ENCODE measurements at regions of chr10 and their contacts with region 1.

Region 1: DNA sequence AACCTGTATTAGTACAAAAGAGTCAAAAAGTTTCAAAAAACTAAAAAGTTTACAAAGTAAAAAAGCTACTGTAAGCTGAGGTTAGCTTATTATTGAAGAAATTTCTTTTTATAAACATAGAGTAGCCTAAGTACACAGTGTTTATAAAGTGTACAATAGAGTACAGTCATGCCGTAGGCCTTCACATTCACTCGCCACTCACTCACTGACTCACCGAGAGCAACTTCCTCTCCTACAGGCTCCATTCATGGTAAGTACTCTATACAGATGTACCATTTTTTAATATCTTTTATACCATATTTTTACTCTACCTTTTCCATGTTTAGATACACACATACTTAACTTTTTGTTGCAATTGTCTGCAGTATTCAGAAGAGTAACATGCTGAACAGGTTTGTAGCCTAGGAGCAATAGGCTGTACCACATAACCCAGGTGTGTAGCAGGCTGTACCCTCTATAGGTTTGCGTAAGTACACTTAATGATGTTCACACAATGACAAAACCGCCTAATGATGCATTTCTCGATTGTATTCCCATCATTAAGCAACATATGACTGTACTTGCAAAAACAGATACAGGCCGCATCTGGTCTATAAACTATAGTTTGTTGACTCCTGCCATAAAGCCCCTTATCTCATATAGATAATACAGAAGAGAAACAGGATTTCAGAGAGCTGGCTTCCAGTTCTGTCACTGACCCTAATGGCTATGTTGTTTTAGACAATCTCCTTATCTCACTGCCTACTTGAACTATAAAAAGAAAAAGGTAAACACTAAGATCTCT is 438.8 kb downstream of the HTR7 start:
- DNase-seq: peak; percentile 87
- H3K4me3 Mint-ChIP-seq: no peak overlapping the region
- H3K27ac Mint-ChIP-seq: peak overlapping the region; percentile 85
- H3K4me1 Mint-ChIP-seq: peaks cover 20% of the 10 kb centered on the region
- H3K27me3 Mint-ChIP-seq: no peaks in the 10 kb centered on the region
- CTCF ChIP-seq: no peak

Region 2: GRCh38 chr10:90148116-90148855 is 270.8 kb before region 1 on chr10:
- CTCF ChIA-PET with region 1: no interaction called
- POLR2A ChIA-PET with region 1: interaction called, 3 read pairs
- intact Hi-C with region 1: loop called (anchors 10 kb)
- DNase-seq: peak; percentile 60
- H3K4me3 Mint-ChIP-seq: no peak overlapping the region
- H3K27ac Mint-ChIP-seq: peak overlapping the region; percentile 44
- H3K4me1 Mint-ChIP-seq: peaks cover 14% of the 10 kb centered on the region
- H3K27me3 Mint-ChIP-seq: no peaks in the 10 kb centered on the region
- CTCF ChIP-seq: peak; percentile 57

Region 3: DNA sequence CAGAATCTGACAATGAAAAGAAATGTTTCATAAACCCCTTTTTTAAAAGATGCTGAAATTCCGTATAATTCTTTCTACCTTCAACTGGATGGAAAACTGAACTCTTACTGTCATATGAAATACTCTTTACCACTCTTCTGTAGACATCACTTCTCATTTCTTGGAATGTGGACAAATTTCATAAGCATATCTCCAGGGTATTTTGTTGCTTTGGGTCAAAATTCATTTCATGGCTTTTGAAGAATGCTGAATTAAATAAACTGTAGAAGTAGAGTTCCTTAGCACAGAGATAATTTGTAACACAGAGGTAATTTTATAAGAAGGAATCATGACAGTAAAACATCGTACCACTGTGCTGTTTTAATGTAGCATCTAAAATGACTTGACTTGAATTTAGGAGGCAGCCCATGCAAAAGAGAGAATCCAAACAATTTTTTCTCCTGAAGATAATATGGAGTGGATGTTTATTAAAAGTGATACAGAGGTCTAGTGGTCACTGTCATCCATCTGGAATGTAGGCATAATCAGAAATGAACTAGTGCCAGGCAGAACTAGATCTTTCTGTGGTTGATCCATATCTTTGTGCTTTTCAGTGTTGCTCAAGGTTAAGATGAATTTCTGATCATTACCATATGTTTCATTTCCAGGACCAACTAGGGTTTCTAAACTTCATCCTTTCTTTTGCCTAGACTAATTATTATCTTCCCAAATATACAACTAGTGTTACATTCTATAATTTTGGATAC is 225.6 kb before region 1 on chr10:
- CTCF ChIA-PET with region 1: no interaction called
- POLR2A ChIA-PET with region 1: interaction called, 12 read pairs
- intact Hi-C with region 1: no loop called
- DNase-seq: no peak
- H3K4me3 Mint-ChIP-seq: no peak overlapping the region
- H3K27ac Mint-ChIP-seq: peak overlapping the region; percentile 29
- H3K4me1 Mint-ChIP-seq: peaks cover 47% of the 10 kb centered on the region
- H3K27me3 Mint-ChIP-seq: no peaks in the 10 kb centered on the region
- CTCF ChIP-seq: no peak

Region 4: DNA sequence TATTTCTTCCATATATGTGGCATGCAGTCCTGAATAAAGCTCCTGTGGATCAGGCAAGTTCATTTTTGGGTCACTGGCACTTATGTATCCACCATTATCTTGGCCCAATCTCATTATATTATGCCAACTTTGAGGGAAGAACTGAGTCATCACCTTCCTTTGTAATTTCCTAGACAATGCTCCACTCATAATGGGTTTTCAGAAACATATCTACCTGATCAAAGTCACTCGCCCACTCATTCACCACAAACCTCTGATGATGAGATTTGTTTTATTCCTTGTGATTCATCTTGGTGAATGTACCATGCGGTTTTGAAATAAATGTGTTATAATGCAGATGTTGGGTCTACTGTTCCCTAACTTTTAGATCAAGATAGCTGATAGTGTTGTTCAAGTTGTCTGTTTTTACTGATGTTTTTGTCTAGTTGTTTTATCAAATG is 191.8 kb before region 1 on chr10:
- CTCF ChIA-PET with region 1: no interaction called
- POLR2A ChIA-PET with region 1: interaction called, 12 read pairs
- intact Hi-C with region 1: loop called (anchors 5 kb)
- DNase-seq: peak; percentile 96
- H3K4me3 Mint-ChIP-seq: no peak overlapping the region
- H3K27ac Mint-ChIP-seq: peak overlapping the region; percentile 49
- H3K4me1 Mint-ChIP-seq: peaks cover 42% of the 10 kb centered on the region
- H3K27me3 Mint-ChIP-seq: no peaks in the 10 kb centered on the region
- CTCF ChIP-seq: no peak

Region 5: GRCh38 chr10:90484518-90484917 is 65.5 kb after region 1 on chr10:
- CTCF ChIA-PET with region 1: interaction called, 3 read pairs
- POLR2A ChIA-PET with region 1: interaction called, 6 read pairs
- intact Hi-C with region 1: loop called (anchors 2 kb)
- DNase-seq: peak; percentile 96
- H3K4me3 Mint-ChIP-seq: peak overlapping the region; percentile 42
- H3K27ac Mint-ChIP-seq: peak overlapping the region; percentile 95
- H3K4me1 Mint-ChIP-seq: peaks cover 40% of the 10 kb centered on the region
- H3K27me3 Mint-ChIP-seq: no peaks in the 10 kb centered on the region
- CTCF ChIP-seq: no peak

Measured in MCF 10A (cell line).